ENCODE measurements at regions of chr4 and their contacts with region 1.

Region 1: DNA sequence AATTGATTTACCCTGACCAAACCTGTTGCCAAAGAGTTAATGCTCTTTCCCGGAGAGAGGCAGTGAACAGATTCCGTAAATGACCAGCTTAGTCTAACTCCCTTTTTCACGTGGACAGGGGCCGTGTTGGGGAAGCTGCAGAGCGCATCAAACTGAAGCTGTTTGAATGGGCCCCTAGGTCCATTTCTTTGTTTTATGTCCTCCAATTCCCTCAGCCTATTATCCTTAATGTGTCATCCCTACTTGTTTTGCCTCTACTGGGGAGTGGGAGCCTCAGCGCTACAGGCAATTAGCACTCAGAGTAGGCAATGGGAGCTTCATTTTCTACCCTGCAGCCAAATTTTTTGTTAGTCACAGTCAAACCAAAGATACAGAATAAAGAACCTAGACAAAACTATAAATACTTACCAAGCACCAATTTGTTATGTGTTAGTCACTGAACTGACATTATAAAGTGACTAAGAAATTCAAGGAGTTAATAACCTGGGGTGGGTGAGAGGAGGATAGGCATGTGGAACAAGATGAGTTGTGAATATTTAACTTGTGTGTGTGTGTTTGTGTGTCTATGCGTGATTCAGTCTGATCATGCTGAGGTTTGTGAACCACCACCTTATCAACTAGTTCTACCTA is 417.4 kb downstream of the PACRGL start:
- DNase-seq: no peak
- H3K4me3 Mint-ChIP-seq: no peak overlapping the region
- H3K27ac Mint-ChIP-seq: no peak overlapping the region
- H3K4me1 Mint-ChIP-seq: no peaks in the 10 kb centered on the region
- H3K27me3 Mint-ChIP-seq: no peaks in the 10 kb centered on the region

Region 2: DNA sequence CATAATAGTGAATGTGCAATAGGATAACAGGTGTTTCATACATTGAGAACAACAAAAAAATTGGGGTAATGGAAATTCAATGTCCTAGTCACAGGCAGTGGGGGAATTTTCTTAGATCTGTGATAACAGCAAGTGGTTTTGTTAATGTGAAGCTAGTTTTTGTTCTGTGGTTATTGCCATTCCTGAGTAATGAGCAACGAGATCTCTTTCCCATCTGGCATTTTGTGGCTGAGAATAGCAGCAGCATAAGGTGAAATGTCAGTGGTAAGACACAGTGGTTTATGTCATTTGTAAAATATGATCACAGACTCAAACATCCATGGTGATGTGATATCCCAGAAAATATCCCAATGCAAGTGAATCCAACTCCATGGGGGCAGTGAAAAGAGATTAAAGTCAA is 333.4 kb after region 1 on chr4:
- intact Hi-C with region 1: loop called (anchors 5 kb)
- DNase-seq: no peak
- H3K4me3 Mint-ChIP-seq: no peak overlapping the region
- H3K27ac Mint-ChIP-seq: no peak overlapping the region
- H3K4me1 Mint-ChIP-seq: no peaks in the 10 kb centered on the region
- H3K27me3 Mint-ChIP-seq: no peaks in the 10 kb centered on the region

Measured in activated CD4-positive, alpha-beta T cell treated with anti-CD3 and anti-CD28 coated beads, Interleukin-2, amount 10 ng/mL, durations not matched to agents 24 days and 14 days (primary cell).